ENCODE measurements at regions of chr3 and their contacts with region 1.

Region 1: DNA sequence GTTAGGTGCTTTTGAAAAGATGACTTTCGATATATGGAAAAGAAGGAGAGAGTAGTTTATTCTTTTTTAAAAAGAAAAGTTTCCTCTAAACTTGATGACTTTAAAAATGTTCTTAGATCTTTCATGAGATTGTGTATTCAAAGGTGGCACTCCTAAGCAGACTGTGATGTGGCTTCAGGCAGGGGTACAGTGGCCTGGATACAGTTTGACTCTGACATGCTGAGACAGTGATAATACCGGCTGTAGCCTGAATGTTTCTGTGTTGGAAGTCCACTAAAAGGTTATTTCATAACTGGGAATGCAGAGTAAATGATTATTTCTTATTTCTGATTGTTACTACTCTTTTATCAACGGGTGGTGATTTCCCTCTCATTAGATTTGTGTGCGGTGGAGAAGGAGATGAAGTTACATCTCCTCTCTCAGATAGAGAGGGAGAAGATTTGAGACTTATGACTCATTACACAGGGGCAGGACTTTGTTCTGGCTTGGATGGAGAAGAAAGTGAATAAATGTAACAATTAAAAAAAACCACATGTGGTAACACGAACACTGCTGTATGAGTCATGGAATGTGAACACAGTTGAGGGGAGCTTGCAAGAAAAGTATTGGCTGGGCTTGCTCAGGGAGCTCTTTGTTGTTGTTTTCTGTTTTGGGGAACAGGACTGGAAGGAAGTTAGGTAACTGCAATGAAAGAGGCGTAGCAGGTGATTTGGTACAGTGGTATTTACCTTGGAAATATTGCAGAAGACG is 21.6 kb downstream of the SPTSSB start:
- DNase-seq: peak; percentile 47
- H3K4me3 Mint-ChIP-seq: no peak overlapping the region
- H3K27ac Mint-ChIP-seq: no peak overlapping the region
- H3K4me1 Mint-ChIP-seq: peaks cover 27% of the 10 kb centered on the region
- H3K27me3 Mint-ChIP-seq: no peaks in the 10 kb centered on the region

Region 2: DNA sequence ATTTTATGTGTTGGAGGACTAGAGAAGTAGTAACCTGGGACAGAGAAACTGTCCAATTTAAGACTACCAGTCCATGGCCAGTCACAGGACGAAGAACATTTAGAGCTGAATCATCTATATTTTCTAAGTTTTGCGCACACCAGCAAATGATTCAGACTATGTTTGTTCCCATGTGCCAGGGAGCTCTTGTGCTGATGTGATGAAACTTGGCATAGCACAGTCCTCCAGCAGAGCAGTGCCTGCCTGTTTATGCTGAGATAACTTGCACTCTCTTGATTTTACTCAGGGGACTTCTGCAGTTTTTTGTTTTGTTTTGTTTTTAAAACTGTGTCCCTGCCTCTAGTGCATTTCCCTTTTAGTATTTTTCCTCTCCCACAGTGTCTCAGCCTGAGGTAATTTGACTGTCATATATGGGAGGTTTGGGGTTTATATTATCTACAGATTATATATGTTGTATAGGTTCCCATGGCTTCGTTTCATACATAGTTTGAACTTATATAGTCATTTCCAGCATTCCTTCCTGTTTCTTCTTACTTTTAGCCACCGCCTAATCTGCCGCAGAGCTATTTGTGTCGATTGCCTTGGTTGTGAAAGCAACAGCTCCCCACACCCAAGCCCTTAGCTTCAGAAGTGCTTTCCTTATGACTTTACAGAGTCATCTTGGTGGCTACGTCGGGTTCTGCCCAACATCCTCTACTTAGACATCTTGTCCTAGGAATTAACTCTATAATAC is 548.2 kb before region 1 on chr3:
- CTCF ChIA-PET with region 1: no interaction called
- intact Hi-C with region 1: loop called (anchors 1 kb)
- DNase-seq: peak; percentile 72
- H3K4me3 Mint-ChIP-seq: no peak overlapping the region
- H3K27ac Mint-ChIP-seq: peak overlapping the region; percentile 69
- H3K4me1 Mint-ChIP-seq: peaks cover 10% of the 10 kb centered on the region
- H3K27me3 Mint-ChIP-seq: no peaks in the 10 kb centered on the region

Region 3: DNA sequence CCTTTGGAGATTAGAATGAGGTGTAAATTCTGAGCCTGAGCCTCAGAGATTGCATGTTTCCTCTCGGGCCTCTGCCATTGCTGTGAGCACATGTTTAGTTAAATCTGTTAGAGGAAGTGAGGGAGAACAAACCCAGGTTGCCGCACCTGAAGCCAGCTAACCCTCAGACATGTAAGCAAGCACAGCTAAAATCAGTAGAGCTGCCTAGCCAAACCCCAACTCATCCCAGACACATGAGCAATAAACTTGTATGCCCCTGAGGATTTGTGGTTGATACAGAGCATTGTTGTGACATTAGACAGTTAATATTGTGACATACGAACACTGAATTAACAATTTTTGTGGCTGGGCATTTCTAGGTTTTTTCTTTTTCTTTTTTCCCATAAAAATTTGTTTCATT is 86.6 kb before region 1 on chr3:
- CTCF ChIA-PET with region 1: no interaction called
- intact Hi-C with region 1: no loop called
- DNase-seq: no peak
- H3K4me3 Mint-ChIP-seq: no peak overlapping the region
- H3K27ac Mint-ChIP-seq: no peak overlapping the region
- H3K4me1 Mint-ChIP-seq: peaks cover 15% of the 10 kb centered on the region
- H3K27me3 Mint-ChIP-seq: no peaks in the 10 kb centered on the region

Region 4: GRCh38 chr3:161310649-161311423 is 38.9 kb before region 1 on chr3:
- CTCF ChIA-PET with region 1: interaction called, 3 read pairs
- intact Hi-C with region 1: loop called (anchors 1 kb)
- DNase-seq: peak; percentile 69
- H3K4me3 Mint-ChIP-seq: no peak overlapping the region
- H3K27ac Mint-ChIP-seq: peak overlapping the region; percentile 43
- H3K4me1 Mint-ChIP-seq: peaks cover 49% of the 10 kb centered on the region
- H3K27me3 Mint-ChIP-seq: no peaks in the 10 kb centered on the region

Region 5: DNA sequence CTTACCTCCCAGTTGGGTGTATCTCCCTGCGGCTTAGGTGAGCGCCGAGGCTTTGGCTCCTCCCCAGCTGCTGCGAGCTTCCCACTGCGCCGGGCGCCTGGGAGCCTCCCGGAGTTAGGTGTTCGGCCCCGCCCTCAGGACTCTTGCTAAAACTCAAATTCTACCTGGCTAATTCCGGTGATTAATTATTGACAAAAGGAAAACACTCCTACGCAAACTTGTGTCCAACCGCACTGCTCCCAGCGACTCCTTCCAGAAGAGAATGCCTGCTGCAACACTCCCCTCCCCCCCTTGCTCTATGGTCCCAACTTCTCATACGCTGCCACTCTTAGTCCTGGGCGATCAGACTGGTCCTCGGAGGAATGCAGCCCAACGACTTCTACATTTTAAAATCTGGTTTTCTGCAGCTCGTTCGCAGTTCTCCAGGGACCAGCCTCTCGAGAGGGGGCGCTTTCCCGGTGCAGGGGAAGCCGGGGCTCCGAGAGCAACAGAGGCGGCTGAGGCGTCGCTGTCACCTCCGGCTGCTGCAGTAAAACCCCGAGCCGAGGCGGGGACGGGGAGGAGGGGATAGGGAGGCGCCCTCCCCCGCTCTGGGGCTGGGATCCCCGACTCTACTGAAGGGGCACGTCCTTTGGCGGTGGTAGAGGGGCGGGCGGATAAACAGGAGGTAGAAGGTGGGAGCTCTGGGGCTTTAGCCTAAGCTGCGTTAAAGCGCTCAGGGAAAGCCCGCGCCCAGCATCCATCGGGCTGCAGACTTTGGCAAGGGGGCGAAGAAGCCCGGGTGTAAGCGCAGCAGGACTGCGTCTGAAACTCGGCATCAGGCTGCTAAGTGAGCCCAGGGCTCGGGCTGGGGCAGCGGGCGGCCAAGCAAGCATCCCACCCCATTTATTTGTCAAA is 22.0 kb after region 1 on chr3 and contains the start of gene SPTSSB:
- CTCF ChIA-PET with region 1: interaction called, 3 read pairs
- intact Hi-C with region 1: loop called (anchors 1 kb)
- DNase-seq: peak; percentile 60
- H3K4me3 Mint-ChIP-seq: peak within 1 kb of the TSS; percentile 79
- H3K27ac Mint-ChIP-seq: no peak within 1 kb of the TSS
- H3K4me1 Mint-ChIP-seq: peaks cover 8% of the 10 kb centered on the region
- H3K27me3 Mint-ChIP-seq: peaks cover 22% of the 10 kb centered on the region
- total RNA-seq, gene SPTSSB: not detected

Region 6: GRCh38 chr3:161430307-161430706 is 80.6 kb after region 1 on chr3:
- CTCF ChIA-PET with region 1: no interaction called
- intact Hi-C with region 1: no loop called
- DNase-seq: no peak
- H3K4me3 Mint-ChIP-seq: no peak overlapping the region
- H3K27ac Mint-ChIP-seq: no peak overlapping the region
- H3K4me1 Mint-ChIP-seq: no peaks in the 10 kb centered on the region
- H3K27me3 Mint-ChIP-seq: peaks cover 8% of the 10 kb centered on the region